Activated CD8-positive, alpha-beta memory T cell treated with anti-CD3 and anti-CD28 coated beads, Interleukin-2, amount 10 ng/mL, durations not matched to agents 7 days and 5 days (primary cell): ENCODE measurements at regions of chr9 and their contacts with region 1.

Region 1: GRCh38 chr9:136991993-136992818 is at the start of gene PAXX:
- DNase-seq: peak; percentile 96
- ATAC-seq: peak; percentile 88
- H3K4me3 Mint-ChIP-seq: peak within 1 kb of the TSS; percentile 84
- H3K27ac Mint-ChIP-seq: peak within 1 kb of the TSS; percentile 82
- H3K4me1 Mint-ChIP-seq: peaks cover 32% of the 10 kb centered on the region
- H3K27me3 Mint-ChIP-seq: peaks cover 9% of the 10 kb centered on the region
- total RNA-seq, gene PAXX: 68.6 to 94.8 TPM

Region 2: DNA sequence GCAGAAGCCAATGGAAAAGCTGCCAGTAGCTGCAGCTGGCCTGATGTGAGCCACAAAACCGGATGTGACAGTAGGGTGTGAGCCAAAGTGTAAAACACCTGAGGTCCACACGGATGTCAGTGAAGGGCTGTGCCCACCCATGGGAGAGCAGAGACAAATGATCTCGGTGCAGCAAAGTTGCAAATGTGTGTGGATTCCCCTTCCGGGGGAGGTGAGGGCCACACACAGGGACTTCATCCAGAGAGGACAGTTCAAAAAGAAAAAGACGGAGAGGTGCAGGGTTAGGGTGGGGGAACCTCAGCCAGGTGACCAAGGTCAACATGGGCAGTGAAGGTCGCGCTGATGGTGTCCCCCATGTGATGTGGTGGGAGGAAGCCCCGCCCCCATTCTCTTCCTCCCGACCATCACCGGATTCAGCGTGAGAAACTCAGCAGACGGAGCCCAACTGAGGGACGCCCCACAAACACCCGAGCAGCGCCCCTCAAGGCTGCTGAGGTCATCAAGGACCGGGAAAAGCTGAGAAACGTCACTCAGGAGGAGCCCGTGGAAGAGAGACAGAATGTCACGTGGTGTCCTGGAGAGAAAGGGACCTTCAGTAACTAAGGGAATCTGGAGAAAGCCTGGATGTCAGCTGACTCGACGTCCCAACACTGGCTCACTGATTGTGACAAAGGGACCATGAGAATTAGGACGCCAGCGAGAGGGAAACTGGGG is 26.3 kb before region 1 on chr9:
- CTCF ChIA-PET with region 1: interaction called, 12 read pairs
- DNase-seq: peak; percentile 81
- ATAC-seq: peak; percentile 72
- H3K4me3 Mint-ChIP-seq: peak overlapping the region; percentile 58
- H3K27ac Mint-ChIP-seq: peak overlapping the region; percentile 86
- H3K4me1 Mint-ChIP-seq: peaks cover 36% of the 10 kb centered on the region
- H3K27me3 Mint-ChIP-seq: no peaks in the 10 kb centered on the region

Region 3: DNA sequence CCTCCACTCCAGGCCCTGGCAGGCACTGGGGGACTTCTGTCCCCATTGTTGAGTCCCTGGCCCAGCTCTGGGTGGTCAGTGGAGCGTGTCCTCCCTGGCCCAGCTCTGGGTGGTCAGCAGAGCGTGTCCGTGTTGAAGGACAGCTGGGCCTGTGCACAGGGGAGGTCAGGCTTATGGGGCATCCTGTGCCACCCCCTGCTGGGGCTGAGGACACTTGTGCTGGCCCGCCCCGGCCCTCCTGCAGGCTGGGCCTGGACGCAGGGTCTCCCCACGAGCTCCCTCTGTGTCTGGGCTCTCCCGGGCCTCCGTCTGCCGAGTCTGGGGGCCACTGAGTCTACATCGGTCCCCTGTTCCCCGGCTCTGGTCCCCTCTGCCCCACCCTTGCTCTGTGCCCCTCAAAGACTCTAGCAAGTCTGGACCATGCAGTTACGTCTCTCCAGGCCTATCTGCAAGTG is 15.6 kb after region 1 on chr9:
- CTCF ChIA-PET with region 1: no interaction called
- DNase-seq: no peak
- ATAC-seq: no peak
- H3K4me3 Mint-ChIP-seq: no peak overlapping the region
- H3K27ac Mint-ChIP-seq: no peak overlapping the region
- H3K4me1 Mint-ChIP-seq: peaks cover 25% of the 10 kb centered on the region
- H3K27me3 Mint-ChIP-seq: no peaks in the 10 kb centered on the region